RWPE1 (cell line): ENCODE measurements at regions of chr5 and their contacts with region 1.

Region 1: DNA sequence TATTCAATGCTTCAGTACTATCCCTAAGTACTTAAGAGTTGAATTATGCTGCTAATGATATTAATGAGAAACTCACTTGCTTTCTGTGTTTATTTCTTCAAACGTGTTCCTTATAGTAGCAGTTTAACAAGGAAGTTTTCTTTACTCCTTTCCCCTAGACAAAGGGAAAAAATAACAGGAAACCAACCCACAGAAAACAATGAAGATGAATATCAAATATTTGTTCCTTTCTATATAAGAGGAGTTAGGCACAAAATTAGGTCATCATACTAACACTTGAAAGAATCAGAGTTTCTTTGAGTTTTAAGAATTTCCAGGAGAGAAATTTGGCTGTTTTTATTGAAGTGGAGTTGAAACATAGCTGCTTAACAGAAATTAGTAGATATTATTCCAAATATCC is 15.4 kb upstream of the OCLN start:
- DNase-seq: no peak
- H3K27ac ChIP-seq: no peak overlapping the region
- CTCF ChIP-seq: no peak

Region 2: DNA sequence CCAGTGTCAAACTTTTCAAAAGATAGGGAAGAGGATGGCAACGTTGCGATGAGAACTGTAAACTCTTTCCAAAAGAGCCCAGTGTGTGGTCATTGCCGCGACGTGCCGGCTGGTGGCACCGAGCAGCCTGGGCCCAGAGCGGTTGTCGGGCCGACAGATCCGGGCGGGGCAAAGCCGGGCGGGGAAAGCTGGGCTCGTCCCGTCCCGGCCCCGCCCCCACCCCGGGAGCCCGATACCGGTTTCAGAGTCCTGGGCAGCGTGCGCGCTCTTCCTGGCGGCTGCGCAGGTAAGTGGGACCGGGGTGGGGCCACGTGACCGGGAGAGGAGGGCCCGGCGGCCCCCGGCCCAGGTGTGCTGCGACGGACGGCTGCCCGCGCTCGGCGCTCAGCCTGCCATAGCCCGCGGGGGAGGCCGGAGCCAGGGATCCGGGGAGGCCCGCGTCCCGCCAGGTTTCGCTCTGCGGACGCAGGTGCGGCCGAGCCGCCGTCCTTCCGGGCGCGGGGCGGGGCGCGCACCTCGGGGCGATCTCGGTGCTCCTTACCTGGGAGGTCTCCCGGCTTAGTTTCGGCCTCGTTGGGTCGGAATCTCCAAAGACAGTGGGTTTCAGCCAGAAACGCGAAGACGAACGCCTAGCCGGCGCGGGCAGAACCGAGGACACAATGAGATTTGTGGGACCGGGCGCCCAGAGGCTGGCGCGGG is 62.1 kb before region 1 on chr5 and contains the start of gene MARVELD2:
- CTCF ChIA-PET with region 1: interaction called, 3 read pairs
- POLR2A ChIA-PET with region 1: interaction called, 13 read pairs
- DNase-seq: peak; percentile 98
- H3K27ac ChIP-seq: peak within 1 kb of the TSS; percentile 68
- CTCF ChIP-seq: peak; percentile 71